Endothelial cell of umbilical vein (primary cell): ENCODE measurements at regions of chr7 and their contacts with region 1.

Region 1: GRCh38 chr7:17680943-17681351 is 259.3 kb downstream of the SNX13 start:
- DNase-seq: peak; percentile 31
- H3K4me3 ChIP-seq: no peak overlapping the region
- H3K27ac ChIP-seq: no peak overlapping the region
- H3K4me1 ChIP-seq: peaks cover 4% of the 10 kb centered on the region
- H3K27me3 ChIP-seq: no peaks in the 10 kb centered on the region
- CTCF ChIP-seq: peak in 1 of 2 donors; percentile 16
- POLR2A ChIP-seq: no peak

Region 2: GRCh38 chr7:17663061-17663675 is 17.8 kb before region 1 on chr7:
- CTCF ChIA-PET with region 1: interaction called, 11 read pairs
- POLR2A ChIA-PET with region 1: no interaction called
- dilution Hi-C with region 1: no loop called
- intact Hi-C with region 1: no loop called
- DNase-seq: no peak
- H3K4me3 ChIP-seq: no peak overlapping the region
- H3K27ac ChIP-seq: no peak overlapping the region
- H3K4me1 ChIP-seq: no peaks in the 10 kb centered on the region
- H3K27me3 ChIP-seq: no peaks in the 10 kb centered on the region
- CTCF ChIP-seq: no peak
- POLR2A ChIP-seq: no peak